ENCODE measurements at regions of chr11 and their contacts with region 1.

Region 1: DNA sequence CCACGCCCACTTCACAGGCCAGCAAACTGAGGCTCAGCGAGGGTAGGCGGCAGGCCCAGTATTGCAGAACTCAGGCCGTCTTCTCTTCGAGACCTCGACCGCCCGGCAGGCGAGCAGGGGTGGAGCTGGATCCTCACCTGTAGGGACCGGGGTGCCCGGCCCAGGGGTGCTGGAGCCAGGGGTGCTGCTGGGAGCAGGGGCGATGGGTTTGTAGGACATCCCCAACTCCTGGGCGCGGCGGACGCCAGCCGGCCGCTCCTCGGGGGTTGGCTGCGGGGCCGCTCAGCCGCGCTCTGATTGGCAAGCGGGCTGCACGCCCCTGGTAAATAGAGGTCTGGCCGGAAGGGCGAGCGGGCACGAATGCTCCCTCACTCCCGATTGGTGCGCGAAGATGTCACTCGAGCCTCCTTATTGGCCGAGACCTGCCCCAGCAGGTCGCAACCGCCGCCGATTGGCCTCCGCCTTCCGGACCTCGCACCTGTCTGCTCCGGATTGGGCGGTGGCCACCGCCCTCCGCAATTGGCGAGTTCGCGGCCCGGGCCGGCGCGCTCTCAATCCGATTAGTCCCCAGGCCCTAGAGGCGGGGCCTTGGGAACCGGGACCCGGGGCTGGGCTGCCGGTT is at the start of gene CDK2AP2:
- DNase-seq: peak; percentile 99 to 100
- H3K4me3 ChIP-seq: peak within 1 kb of the TSS; percentile 66
- H3K27ac ChIP-seq: peak within 1 kb of the TSS; percentile 79
- H3K4me1 ChIP-seq: peaks cover 33% of the 10 kb centered on the region
- H3K27me3 ChIP-seq: peaks cover 4% of the 10 kb centered on the region; the same call in 1 of the 2 replicates
- CTCF ChIP-seq: no peak
- total RNA-seq, gene CDK2AP2: 80.0 and 89.3 TPM in 2 replicates

Region 2: GRCh38 chr11:67353317-67354074 is 154.5 kb before region 1 on chr11 and contains the start of gene POLD4:
- CTCF ChIA-PET with region 1: no interaction called
- POLR2A ChIA-PET with region 1: interaction called, 10 read pairs
- intact Hi-C with region 1: loop called (anchors 2 kb)
- DNase-seq: peak; percentile 90 to 99
- H3K4me3 ChIP-seq: peak within 1 kb of the TSS; percentile 93
- H3K27ac ChIP-seq: peak within 1 kb of the TSS; percentile 90
- H3K4me1 ChIP-seq: peaks cover 70% of the 10 kb centered on the region
- H3K27me3 ChIP-seq: no peaks in the 10 kb centered on the region
- CTCF ChIP-seq: peak; percentile 24; the same call in 1 of the 2 replicates
- total RNA-seq, gene POLD4: 67.1 and 83.7 TPM in 2 replicates

Region 3: DNA sequence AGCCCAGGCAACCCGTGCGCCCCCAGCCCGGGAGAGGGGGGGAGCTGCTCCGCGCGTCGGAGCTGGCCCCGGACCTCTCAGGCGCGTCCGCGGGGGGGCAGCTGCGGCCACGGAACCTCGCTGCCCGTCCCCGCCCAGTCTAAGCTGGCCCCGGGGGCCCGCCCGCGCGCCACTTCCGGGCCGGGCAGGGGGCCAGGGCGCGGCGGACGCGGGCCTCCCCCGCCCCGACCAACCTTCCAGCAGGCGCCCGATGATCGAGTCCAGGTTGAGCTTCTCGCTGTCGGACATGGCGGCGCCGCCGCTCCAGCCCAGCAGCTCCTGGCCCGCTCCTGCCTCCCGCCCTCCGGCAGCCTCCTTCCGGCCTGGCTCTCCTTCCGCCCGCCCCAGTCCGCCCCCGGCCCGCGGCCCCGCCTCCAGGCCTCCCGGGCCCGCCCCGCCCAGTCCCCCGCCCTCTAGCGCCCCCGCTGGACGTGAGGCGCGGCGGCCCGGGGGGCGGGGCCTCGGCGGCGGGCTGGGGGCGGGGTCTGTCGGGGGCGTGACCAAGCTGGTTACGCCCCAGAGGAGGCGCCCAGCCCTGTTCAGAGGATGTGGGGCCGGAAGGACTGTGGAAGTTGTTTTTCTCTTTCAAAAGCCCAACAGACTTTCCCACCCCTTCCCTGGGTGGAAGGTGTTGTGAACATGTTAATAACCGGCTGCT is 106.3 kb before region 1 on chr11 and contains the start of gene PPP1CA:
- CTCF ChIA-PET with region 1: interaction called, 3 read pairs
- POLR2A ChIA-PET with region 1: no interaction called
- intact Hi-C with region 1: loop called (anchors 2 kb)
- DNase-seq: peak; percentile 64 to 94
- H3K4me3 ChIP-seq: peak within 1 kb of the TSS; percentile 99
- H3K27ac ChIP-seq: peak within 1 kb of the TSS; percentile 41; the same call in 1 of the 2 replicates
- H3K4me1 ChIP-seq: peaks cover 14% of the 10 kb centered on the region
- H3K27me3 ChIP-seq: no peaks in the 10 kb centered on the region
- CTCF ChIP-seq: peak; percentile 35; the same call in 1 of the 2 replicates
- total RNA-seq, gene PPP1CA: 306 and 351 TPM in 2 replicates

Region 4: GRCh38 chr11:67428052-67428914 is 79.7 kb before region 1 on chr11 and contains the start of gene RPS6KB2:
- CTCF ChIA-PET with region 1: interaction called, 3 read pairs
- POLR2A ChIA-PET with region 1: no interaction called
- intact Hi-C with region 1: loop called (anchors 1 kb)
- DNase-seq: peak; percentile 91 to 98
- H3K4me3 ChIP-seq: peak within 1 kb of the TSS; percentile 95
- H3K27ac ChIP-seq: peak within 1 kb of the TSS; percentile 39
- H3K4me1 ChIP-seq: peaks cover 21% of the 10 kb centered on the region
- H3K27me3 ChIP-seq: no peaks in the 10 kb centered on the region
- CTCF ChIP-seq: no peak
- total RNA-seq, gene RPS6KB2: 52.0 and 54.0 TPM in 2 replicates

Region 5: GRCh38 chr11:67468835-67469811 is 38.9 kb before region 1 on chr11 and contains the start of gene TMEM134:
- CTCF ChIA-PET with region 1: no interaction called
- POLR2A ChIA-PET with region 1: no interaction called
- intact Hi-C with region 1: loop called (anchors 1 kb)
- DNase-seq: peak; percentile 80 to 91
- H3K4me3 ChIP-seq: peak within 1 kb of the TSS; percentile 92
- H3K27ac ChIP-seq: peak within 1 kb of the TSS; percentile 48
- H3K4me1 ChIP-seq: peaks cover 32% of the 10 kb centered on the region
- H3K27me3 ChIP-seq: no peaks in the 10 kb centered on the region
- CTCF ChIP-seq: peak; percentile 48
- total RNA-seq, gene TMEM134: 85.7 and 125 TPM in 2 replicates

Region 6: GRCh38 chr11:67572747-67573419 is 64.9 kb after region 1 on chr11:
- CTCF ChIA-PET with region 1: no interaction called
- POLR2A ChIA-PET with region 1: no interaction called
- intact Hi-C with region 1: loop called (anchors 2 kb)
- DNase-seq: peak; percentile 65 to 72
- H3K4me3 ChIP-seq: no peak overlapping the region
- H3K27ac ChIP-seq: peak overlapping the region; percentile 34
- H3K4me1 ChIP-seq: peaks cover 14% of the 10 kb centered on the region
- H3K27me3 ChIP-seq: no peaks in the 10 kb centered on the region
- CTCF ChIP-seq: peak; percentile 87